Ascending aorta (tissue), 2 donors: ENCODE measurements at regions of chr9 and their contacts with region 1.

Region 1: GRCh38 chr9:112486221-112487007 is at the start of gene KIAA1958:
- DNase-seq: peak; percentile 33 to 89
- H3K4me3 ChIP-seq: peak within 1 kb of the TSS; percentile 96 to 99
- H3K27ac ChIP-seq: peak within 1 kb of the TSS; percentile 80 to 89
- H3K4me1 ChIP-seq: peaks cover 3 to 10% of the 10 kb centered on the region in 2 donors
- H3K27me3 ChIP-seq: no peaks in the 10 kb centered on the region
- CTCF ChIP-seq: no peak
- total RNA-seq, gene KIAA1958: 2.0 TPM

Region 2: DNA sequence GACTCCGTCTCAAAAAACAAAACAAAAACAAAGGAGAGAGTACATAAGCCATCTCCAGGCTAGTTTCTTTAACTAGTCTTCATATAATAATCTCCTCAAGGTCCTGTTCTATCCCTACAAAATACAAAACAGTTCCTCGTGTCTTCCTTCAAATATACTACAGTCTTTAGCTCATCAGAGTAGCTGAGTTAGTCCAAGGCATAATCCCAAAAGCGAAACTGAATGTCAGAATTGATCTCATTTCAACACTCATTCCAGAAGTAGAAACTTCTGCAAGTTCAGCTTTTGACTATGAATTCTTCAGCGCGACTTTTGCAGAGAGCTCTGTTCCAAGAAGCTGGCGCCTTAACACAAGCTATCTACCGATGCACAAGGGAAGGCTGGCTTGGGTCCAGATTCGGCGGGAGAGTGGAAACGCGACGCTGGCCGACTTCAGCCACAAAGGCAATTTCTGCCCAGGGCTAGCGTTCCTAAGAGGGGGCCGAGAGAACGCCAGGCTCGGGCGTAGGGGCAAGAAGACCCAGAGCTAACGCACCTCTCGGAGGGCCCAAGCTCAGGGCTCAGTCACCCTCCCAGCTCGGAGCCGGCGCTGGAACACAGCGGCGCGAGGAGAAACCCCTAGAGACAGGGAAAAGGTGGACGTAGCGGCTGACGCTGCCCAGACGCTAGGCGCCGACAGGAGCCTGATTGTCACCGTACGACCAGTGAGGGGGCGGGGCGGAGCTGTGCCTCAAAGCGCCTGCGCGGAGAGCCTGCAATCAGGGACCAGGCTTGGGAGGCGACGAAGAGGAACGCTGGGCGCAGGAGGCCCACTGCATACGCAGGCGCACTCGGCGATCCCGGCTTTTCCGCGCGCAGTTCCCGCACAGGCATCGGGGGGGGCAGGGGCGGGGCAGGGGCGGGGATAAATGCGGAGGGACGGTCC is 107.0 kb before region 1 on chr9:
- intact Hi-C with region 1: loop called (anchors 1 kb)
- DNase-seq: peak; percentile 97 to 100
- H3K4me3 ChIP-seq: peak overlapping the region; percentile 89 to 94
- H3K27ac ChIP-seq: peak overlapping the region; percentile 92 to 98
- H3K4me1 ChIP-seq: peaks cover 0 to 30% of the 10 kb centered on the region in 2 donors
- H3K27me3 ChIP-seq: no peaks in the 10 kb centered on the region
- CTCF ChIP-seq: no peak

Region 3: GRCh38 chr9:112447283-112447761 is 39.1 kb before region 1 on chr9:
- intact Hi-C with region 1: loop called (anchors 5 kb)
- DNase-seq: peak in 1 of 2 donors; percentile 70
- H3K4me3 ChIP-seq: no peak overlapping the region
- H3K27ac ChIP-seq: peak overlapping the region; percentile 70 to 79
- H3K4me1 ChIP-seq: peaks cover 0 to 13% of the 10 kb centered on the region in 2 donors
- H3K27me3 ChIP-seq: no peaks in the 10 kb centered on the region
- CTCF ChIP-seq: no peak

Region 4: GRCh38 chr9:112819635-112820496 is 333.5 kb after region 1 on chr9:
- intact Hi-C with region 1: loop called (anchors 5 kb)
- DNase-seq: peak in 1 of 2 donors; percentile 82
- H3K4me3 ChIP-seq: no peak overlapping the region
- H3K27ac ChIP-seq: peak overlapping the region in 1 of 2 donors; percentile 19
- H3K4me1 ChIP-seq: peaks cover 0 to 8% of the 10 kb centered on the region in 2 donors
- H3K27me3 ChIP-seq: no peaks in the 10 kb centered on the region
- CTCF ChIP-seq: peak; percentile 50 to 72 (median 53)